ENCODE measurements at regions of chr5 and their contacts with region 1.

Region 1: DNA sequence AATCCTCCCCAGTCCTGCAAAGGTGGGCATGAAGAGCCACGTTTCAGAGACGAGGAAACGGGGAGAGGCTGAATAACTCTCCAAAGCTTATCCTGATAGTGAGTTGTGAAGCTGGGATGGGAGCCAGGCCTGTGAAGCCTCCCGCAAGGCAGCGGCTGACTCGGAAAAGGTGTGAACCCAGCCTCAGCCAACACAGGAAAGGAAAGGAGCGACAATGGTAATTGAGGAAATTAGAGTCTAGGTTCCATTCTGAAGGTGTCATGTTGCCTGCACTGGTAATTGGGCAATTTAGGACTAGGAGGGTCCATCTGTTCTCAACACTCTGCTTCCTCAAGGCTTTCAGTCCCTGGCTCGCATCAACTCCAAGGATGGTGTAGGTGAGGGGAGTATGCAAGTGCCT is 83.4 kb downstream of the LIFR start:
- H3K4me3 ChIP-seq: no peak overlapping the region
- H3K27ac ChIP-seq: no peak overlapping the region
- H3K4me1 ChIP-seq: no peaks in the 10 kb centered on the region
- CTCF ChIP-seq: no peak

Region 2: GRCh38 chr5:38938424-38938823 is 465.4 kb after region 1 on chr5:
- CTCF ChIA-PET with region 1: interaction called, 11 read pairs
- POLR2A ChIA-PET with region 1: no interaction called
- H3K4me3 ChIP-seq: no peak overlapping the region
- H3K27ac ChIP-seq: no peak overlapping the region
- H3K4me1 ChIP-seq: peaks cover 4% of the 10 kb centered on the region; the same call in 1 of the 2 replicates
- CTCF ChIP-seq: no peak

Measured in HEK293 (cell line).